Sciatic nerve (tissue), 2 donors: ENCODE measurements at regions of chr12 and their contacts with region 1.

Region 1: DNA sequence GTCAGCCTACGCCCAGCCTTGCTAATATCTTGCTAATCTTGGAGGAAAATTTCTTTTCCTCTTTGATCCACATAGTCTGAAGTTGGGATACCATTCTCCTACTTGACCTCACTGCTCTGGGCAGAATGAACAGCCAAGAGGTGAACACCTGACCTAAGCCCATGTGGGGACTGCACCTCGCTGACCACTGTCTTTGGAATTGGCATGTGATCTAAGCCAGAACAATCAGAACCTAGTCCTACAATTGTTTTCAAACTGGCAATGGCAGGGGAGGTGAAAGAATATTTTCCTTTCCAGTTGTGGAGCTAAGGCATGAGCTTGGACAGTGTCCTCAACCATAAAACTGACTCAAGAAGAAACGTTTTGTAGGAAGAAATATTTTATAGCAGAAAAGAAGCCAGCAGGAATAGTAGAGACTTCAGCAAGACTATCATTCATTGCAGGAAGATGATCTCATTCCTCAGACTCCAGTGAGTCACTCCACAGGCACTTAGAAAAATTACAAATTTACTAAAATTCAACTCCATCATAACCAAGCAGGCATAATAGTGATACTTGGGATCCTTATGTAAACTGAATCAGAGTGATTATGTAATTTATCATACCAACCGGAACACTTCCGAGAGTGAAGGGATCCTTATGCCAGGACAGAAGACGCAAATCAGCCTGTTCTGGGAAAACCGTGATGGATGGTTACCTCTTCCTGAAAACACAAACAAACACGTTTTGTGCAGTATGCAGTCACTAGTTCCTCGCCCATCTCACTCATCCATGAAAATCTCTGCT is 14.7 kb downstream of the PTPRO start:
- DNase-seq: no peak
- ATAC-seq: no peak

Region 2: DNA sequence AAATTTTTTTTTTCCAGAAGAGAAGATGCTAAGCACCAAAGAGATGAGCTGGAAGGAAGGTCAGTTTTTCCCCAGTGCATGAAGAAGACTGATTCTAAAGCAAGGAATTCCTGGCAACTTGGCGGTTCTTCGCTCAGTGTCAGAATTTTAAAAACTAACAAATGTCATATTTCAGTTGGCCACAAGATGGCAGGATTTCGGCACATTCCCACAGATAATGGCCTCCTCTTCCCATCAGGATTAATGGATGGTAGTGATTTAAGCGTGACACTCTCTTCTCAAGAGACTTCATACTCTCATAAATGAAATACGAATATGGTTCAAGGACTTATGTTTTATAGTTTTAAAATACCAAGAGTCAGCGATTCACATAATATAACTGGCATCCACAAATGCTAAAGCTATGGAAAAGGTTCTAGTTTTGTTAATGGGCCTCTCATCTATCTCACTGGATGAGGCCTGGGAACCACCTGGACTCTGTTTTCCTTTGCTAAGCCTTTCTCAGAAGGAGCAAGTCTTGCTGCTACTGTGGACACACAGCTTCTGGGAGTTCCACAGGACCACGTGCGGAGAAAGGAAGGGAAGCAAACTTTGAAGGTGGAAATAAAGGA is 60.8 kb before region 1 on chr12:
- intact Hi-C with region 1: no loop called
- DNase-seq: no peak
- ATAC-seq: peak; percentile 70

Region 3: DNA sequence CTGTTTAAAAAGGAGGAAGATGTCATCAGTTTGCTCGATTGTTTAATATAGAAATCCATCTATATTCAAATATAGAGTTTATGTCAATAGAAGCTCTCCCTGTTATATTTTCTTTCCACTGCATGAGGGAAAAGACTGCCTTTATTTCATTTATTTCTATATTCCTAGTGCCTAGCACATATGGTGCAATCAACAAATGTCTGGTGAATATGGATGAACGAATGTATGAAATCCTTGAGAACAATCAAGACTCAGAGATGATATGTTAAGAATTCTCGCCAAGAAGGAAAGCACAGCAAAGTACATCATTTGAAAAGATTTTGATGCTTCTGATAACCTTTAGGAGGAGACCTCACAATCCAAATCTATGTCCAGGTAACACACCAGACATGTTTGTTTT is 1565.0 kb after region 1 on chr12:
- intact Hi-C with region 1: loop called (anchors 10 kb)
- DNase-seq: no peak
- ATAC-seq: no peak